ENCODE measurements at regions of chr12 and their contacts with region 1.

Region 1: GRCh38 chr12:108731105-108731865 is at the start of gene CORO1C:
- DNase-seq: peak; percentile 99
- H3K4me3 Mint-ChIP-seq: peak within 1 kb of the TSS; percentile 94
- H3K27ac Mint-ChIP-seq: peak within 1 kb of the TSS; percentile 95
- H3K4me1 Mint-ChIP-seq: peaks cover 41% of the 10 kb centered on the region
- H3K27me3 Mint-ChIP-seq: peaks cover 6% of the 10 kb centered on the region
- total RNA-seq, gene CORO1C: 64.6 and 70.1 TPM in 2 replicates

Region 2: GRCh38 chr12:108664338-108665258 is 66.7 kb before region 1 on chr12:
- intact Hi-C with region 1: loop called (anchors 1 kb)
- DNase-seq: peak; percentile 95
- H3K4me3 Mint-ChIP-seq: peak overlapping the region; percentile 58
- H3K27ac Mint-ChIP-seq: peak overlapping the region; percentile 77
- H3K4me1 Mint-ChIP-seq: peaks cover 15% of the 10 kb centered on the region
- H3K27me3 Mint-ChIP-seq: no peaks in the 10 kb centered on the region